ENCODE measurements at regions of chr2 and their contacts with region 1.

Region 1: GRCh38 chr2:150425121-150425955 is 62.1 kb downstream of the RND3 start:
- DNase-seq: no peak

Region 2: GRCh38 chr2:150063432-150063889 is 361.9 kb before region 1 on chr2:
- intact Hi-C with region 1: no loop called
- DNase-seq: no peak

Region 3: DNA sequence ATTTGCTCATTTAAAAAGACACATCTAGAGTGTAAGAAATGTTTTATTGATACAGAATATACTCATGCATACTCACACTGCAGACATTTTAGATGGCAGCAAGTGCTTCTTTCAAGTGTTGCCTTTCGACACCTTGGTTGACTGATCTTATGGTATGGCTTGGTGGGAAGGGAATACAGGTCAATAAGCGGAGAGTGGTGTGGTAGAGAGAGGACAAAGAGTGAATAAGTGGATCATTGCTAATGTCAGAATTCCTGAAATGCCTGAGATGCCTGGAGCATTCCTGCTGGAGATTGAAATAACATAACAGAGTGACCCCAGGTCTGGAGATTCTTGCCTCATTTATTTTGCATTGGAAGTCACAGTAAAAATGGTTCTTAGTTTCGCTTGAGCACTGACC is 14.5 kb before region 1 on chr2:
- intact Hi-C with region 1: no loop called
- DNase-seq: no peak

Region 4: DNA sequence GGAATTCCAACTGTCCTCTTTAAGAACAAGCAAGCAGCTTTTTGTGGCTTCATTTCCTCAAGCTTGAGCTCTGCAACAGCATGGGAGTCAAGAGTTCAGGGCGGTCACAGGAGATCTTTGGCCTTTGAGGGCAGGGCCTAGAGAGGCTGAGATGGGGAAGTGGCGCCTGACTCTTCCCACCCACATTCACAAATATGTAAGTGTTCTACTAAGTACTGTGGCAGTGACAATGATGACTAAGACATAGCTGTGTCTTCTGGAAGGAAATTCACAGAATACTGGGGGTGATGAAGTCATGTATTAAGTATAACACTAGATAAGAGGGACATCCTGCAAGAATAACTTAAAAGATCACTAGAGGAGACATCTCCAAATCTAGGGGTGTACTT is 47.2 kb after region 1 on chr2:
- intact Hi-C with region 1: loop called (anchors 5 kb)
- DNase-seq: peak; percentile 80

Region 5: DNA sequence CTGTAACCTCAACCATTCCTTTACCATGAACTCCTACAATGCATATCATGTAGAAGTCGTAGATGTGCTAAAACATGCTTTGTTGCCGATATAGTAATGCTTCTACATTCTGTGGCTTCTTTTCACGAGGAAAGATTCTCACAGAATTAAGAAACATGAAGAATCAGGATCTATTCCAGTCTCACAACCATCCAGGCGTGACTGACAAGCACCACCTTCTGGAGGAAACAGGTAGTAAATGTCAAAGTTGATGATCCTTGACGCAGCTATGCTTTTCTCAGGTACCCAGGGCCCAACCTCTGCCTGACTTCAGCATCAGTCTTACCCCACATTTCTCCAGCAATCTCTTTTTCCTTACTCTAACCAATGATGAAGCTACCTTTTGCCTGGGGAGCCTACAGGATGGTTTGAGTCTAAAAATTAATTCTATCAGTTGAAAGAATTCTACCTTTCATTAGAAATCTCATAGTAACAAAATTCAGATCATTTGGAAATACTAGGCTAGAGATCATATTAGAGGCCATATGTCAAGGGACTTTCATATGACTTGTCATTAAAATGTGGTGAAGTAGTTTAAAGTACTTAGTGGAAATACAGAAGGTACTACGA is 185.4 kb after region 1 on chr2:
- intact Hi-C with region 1: loop called (anchors 5 kb)
- DNase-seq: no peak